ENCODE measurements at regions of chr5 and their contacts with region 1.

Region 1: DNA sequence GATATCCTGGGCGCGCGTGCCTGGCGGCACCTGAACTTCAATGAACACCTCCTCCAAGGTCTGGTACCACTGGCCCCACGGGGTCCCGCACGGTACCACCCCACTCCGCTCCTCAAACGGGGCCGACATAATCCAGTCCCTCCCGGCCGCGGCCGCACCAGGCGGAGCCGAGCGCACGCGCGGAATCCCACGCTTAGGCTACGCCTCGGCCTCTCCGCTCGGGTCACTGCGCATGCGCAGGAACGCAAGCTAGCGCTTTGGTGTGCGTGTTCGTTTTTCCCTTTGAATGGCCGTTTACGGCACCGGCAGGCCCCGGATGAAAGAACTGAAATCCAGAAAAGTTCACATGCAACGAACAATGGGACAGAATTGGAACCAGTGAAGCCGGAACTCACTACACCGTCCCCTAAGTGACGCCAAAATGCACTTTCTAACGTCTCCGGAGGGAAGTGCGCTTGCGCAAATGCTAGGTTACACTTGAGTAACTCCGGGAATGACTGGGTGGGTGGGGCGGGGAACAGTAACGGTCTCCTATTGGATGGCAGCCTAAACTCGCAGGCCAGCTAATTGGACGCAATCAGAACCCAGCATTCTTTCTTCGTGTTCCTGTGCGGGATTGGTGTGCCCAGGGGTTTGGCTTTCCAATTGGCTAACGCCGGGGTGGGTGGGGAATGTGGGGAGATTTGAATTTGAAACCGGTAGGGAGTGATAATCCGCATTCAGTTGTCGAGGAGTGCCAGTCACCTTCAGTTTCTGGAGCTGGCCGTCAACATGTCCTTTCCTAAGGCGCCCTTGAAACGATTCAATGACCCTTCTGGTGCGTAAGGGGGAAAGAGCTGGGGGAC is at the starts of genes HMMR and NUDCD2:
- DNase-seq: peak; percentile 95 to 98
- H3K4me3 ChIP-seq: peak within 1 kb of the TSS; percentile 84
- H3K4me3 Mint-ChIP-seq: peak within 1 kb of the TSS; percentile 81
- H3K27ac Mint-ChIP-seq: peak within 1 kb of the TSS; percentile 100
- H3K4me1 ChIP-seq: peaks cover 8% of the 10 kb centered on the region; the same call in 1 of the 2 replicates
- H3K4me1 Mint-ChIP-seq: no peaks in the 10 kb centered on the region
- H3K27me3 ChIP-seq: no peaks in the 10 kb centered on the region
- H3K27me3 Mint-ChIP-seq: no peaks in the 10 kb centered on the region
- CTCF ChIP-seq: no peak
- total RNA-seq, gene HMMR: 61.1 and 64.2 TPM in 2 replicates
- total RNA-seq, gene NUDCD2: 50.0 and 50.9 TPM in 2 replicates

Region 2: DNA sequence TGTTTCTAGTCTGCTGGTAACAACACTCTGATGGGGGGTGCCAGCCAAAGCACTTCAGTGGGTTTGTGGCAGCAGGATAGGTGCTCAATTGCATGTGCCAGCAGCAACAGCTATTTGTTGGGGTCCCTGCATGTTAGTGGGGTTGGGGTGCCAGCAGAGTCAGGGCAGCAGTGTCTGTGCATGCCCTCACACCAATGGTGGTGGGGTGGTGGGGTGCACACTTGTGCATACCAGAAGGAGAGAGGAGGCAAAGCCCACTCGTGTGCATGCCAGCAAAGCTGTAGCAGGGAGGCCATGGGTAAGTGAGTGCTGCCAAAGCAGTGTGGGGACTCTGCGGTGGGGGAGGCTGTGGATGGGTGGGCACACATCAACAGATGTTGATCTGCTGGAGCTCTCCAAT is 1160.4 kb before region 1 on chr5:
- CTCF ChIA-PET with region 1: no interaction called
- POLR2A ChIA-PET with region 1: interaction called, 13 read pairs
- intact Hi-C with region 1: no loop called
- DNase-seq: no peak
- H3K4me3 ChIP-seq: no peak overlapping the region
- H3K4me3 Mint-ChIP-seq: no peak overlapping the region
- H3K27ac Mint-ChIP-seq: no peak overlapping the region
- H3K4me1 ChIP-seq: no peaks in the 10 kb centered on the region
- H3K4me1 Mint-ChIP-seq: no peaks in the 10 kb centered on the region
- H3K27me3 ChIP-seq: no peaks in the 10 kb centered on the region
- H3K27me3 Mint-ChIP-seq: no peaks in the 10 kb centered on the region
- CTCF ChIP-seq: no peak

Region 3: GRCh38 chr5:163379298-163380155 is 80.6 kb before region 1 on chr5:
- CTCF ChIA-PET with region 1: no interaction called
- POLR2A ChIA-PET with region 1: interaction called, 20 read pairs
- intact Hi-C with region 1: no loop called
- DNase-seq: peak; percentile 47 to 59
- H3K4me3 ChIP-seq: no peak overlapping the region
- H3K4me3 Mint-ChIP-seq: no peak overlapping the region
- H3K27ac Mint-ChIP-seq: peak overlapping the region; percentile 86
- H3K4me1 ChIP-seq: peaks cover 28% of the 10 kb centered on the region
- H3K4me1 Mint-ChIP-seq: peaks cover 24% of the 10 kb centered on the region
- H3K27me3 ChIP-seq: no peaks in the 10 kb centered on the region
- H3K27me3 Mint-ChIP-seq: no peaks in the 10 kb centered on the region
- CTCF ChIP-seq: no peak

Region 4: DNA sequence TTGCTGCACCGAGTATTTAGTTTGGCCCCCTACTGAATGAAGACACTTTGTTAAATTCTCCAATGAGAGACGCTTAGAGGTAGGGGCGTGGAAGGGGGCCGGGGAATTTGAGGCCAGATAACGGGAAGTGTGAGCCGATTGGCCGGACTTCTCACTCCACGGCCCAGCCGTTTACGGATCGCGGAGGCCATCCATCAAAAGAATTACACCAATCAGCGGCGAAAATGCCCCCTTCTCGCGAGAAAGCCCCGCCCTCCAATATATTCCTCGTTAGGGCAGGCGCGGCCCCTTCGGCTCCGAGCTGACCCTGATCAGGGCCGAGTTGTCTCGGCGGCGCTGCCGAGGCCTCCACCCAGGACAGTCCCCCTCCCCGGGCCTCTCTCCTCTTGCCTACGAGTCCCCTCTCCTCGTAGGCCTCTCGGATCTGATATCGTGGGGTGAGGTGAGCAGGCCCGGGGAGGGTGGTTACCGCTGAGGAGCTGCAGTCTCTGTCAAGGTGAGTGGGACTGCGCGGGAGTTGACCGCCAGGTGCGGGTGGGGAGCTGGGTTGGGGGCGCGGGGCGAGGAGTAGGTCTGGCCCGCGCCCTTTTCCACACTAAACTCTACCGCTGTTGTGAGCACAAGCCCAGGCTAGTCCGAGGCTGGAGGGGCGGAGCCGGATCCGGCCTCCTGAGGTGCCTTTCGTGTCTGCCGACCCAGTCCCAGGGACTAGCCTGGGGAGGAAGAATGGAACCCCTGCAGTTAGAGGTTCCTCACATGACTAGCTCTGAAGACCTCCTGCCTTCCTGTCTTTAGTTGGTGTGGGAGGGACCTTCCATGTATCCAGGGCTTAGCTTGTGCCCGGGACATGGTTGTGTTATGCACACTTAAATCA is 22.6 kb before region 1 on chr5 and contains the start of gene CCNG1:
- CTCF ChIA-PET with region 1: interaction called, 9 read pairs
- POLR2A ChIA-PET with region 1: interaction called, 120 read pairs
- intact Hi-C with region 1: loop called (anchors 1 kb)
- DNase-seq: peak; percentile 97 to 98
- H3K4me3 ChIP-seq: peak within 1 kb of the TSS; percentile 74
- H3K4me3 Mint-ChIP-seq: peak within 1 kb of the TSS; percentile 90
- H3K27ac Mint-ChIP-seq: peak within 1 kb of the TSS; percentile 89
- H3K4me1 ChIP-seq: peaks cover 7% of the 10 kb centered on the region; the same call in 1 of the 2 replicates
- H3K4me1 Mint-ChIP-seq: peaks cover 8% of the 10 kb centered on the region
- H3K27me3 ChIP-seq: no peaks in the 10 kb centered on the region
- H3K27me3 Mint-ChIP-seq: no peaks in the 10 kb centered on the region
- CTCF ChIP-seq: peak in 1 of 2 experiments; percentile 1
- total RNA-seq, gene CCNG1: 175 and 181 TPM in 2 replicates

Region 5: DNA sequence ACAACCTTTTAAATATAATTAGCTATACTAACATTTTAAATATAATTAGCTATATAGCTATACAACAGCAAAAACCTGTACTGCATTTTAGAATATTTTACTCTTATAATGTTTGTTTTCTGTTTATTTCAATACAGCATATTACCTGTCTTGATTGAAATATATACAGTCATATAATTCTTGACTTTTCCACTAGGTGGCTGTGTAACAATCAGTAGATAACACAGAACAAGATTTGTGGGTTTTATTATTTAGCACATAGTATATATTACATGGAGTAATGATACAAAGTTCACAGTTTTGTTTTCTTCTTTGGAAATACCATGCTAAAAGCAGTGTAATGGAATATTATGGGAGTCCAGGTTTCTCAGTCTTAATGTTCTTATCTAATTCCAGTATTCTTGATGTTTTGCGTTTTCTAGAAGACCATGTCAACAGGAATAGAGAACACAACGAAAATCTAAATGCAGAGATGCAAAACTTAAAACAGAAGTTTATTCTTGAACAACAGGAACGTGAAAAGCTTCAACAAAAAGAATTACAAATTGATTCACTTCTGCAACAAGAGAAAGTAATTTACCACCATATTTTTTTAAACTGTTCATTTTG is 13.6 kb after region 1 on chr5:
- CTCF ChIA-PET with region 1: no interaction called
- POLR2A ChIA-PET with region 1: no interaction called
- intact Hi-C with region 1: no loop called
- DNase-seq: no peak
- H3K4me3 ChIP-seq: no peak overlapping the region
- H3K4me3 Mint-ChIP-seq: no peak overlapping the region
- H3K27ac Mint-ChIP-seq: no peak overlapping the region
- H3K4me1 ChIP-seq: no peaks in the 10 kb centered on the region
- H3K4me1 Mint-ChIP-seq: no peaks in the 10 kb centered on the region
- H3K27me3 ChIP-seq: no peaks in the 10 kb centered on the region
- H3K27me3 Mint-ChIP-seq: no peaks in the 10 kb centered on the region
- CTCF ChIP-seq: peak in 1 of 2 experiments; percentile 35

Region 6: GRCh38 chr5:163505368-163506094 is 45.4 kb after region 1 on chr5 and contains the start of gene MAT2B:
- CTCF ChIA-PET with region 1: interaction called, 4 read pairs
- POLR2A ChIA-PET with region 1: interaction called, 19 read pairs
- intact Hi-C with region 1: loop called (anchors 1 kb)
- DNase-seq: peak; percentile 94 to 95
- H3K4me3 ChIP-seq: peak within 1 kb of the TSS; percentile 72
- H3K4me3 Mint-ChIP-seq: peak within 1 kb of the TSS; percentile 85
- H3K27ac Mint-ChIP-seq: peak within 1 kb of the TSS; percentile 94
- H3K4me1 ChIP-seq: peaks cover 29% of the 10 kb centered on the region
- H3K4me1 Mint-ChIP-seq: peaks cover 12% of the 10 kb centered on the region
- H3K27me3 ChIP-seq: no peaks in the 10 kb centered on the region
- H3K27me3 Mint-ChIP-seq: no peaks in the 10 kb centered on the region
- CTCF ChIP-seq: peak; percentile 32 to 75
- total RNA-seq, gene MAT2B: 23.4 and 25.1 TPM in 2 replicates